ENCODE measurements at regions of chr3 and their contacts with region 1.

Region 1: GRCh38 chr3:141360888-141361598 is 7.3 kb upstream of the ZBTB38 start:
- DNase-seq: no peak
- H3K4me3 Mint-ChIP-seq: no peak overlapping the region
- H3K27ac Mint-ChIP-seq: no peak overlapping the region
- H3K4me1 Mint-ChIP-seq: peaks cover 8% of the 10 kb centered on the region
- H3K27me3 Mint-ChIP-seq: peaks cover 20% of the 10 kb centered on the region

Region 2: GRCh38 chr3:141129541-141130011 is 231.5 kb before region 1 on chr3:
- CTCF ChIA-PET with region 1: no interaction called
- DNase-seq: no peak
- H3K4me3 Mint-ChIP-seq: no peak overlapping the region
- H3K27ac Mint-ChIP-seq: no peak overlapping the region
- H3K4me1 Mint-ChIP-seq: no peaks in the 10 kb centered on the region
- H3K27me3 Mint-ChIP-seq: peaks cover 6% of the 10 kb centered on the region

Region 3: DNA sequence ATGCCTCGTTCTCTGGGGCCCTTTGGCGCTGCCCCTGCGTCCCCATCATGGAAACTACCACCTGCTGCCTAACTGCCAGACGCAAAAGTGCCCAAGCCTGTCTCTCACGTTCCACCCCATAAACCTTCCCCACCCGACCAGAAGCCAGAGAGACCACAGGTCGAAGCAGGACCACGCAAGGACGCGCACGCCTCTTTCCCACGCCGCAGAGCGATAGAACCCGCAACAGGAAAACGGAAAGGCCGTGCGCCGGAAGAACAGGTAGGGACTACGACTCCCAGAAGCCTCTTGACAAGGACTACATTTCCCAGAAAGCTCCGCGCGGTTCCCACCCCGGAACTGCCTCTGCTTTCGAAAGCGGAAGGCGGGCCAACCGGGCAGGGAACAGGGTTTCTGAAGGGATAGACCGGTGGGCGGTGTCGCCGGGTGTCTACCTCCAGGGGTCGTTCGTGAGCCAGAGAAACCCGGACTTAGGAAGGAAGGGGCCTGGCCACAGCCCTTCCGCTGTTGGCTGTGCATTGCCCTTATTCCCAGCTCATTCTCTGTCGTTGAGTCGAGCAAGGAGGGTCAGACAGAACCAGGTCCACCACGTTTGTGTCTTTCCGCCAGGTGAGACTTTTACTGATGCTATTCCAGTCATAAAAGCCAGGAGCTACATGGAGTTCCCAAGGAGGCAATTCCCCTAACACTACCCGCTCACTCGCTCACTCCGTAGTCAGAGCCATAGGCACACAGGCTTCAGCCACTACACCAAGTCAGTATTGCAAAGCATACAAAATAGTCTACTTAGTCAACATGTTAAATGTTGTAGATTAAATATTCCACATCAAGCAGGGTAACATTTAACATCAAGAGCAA is 49.3 kb before region 1 on chr3:
- CTCF ChIA-PET with region 1: interaction called, 48 read pairs
- DNase-seq: peak; percentile 99
- H3K4me3 Mint-ChIP-seq: peak overlapping the region; percentile 96
- H3K27ac Mint-ChIP-seq: peak overlapping the region; percentile 97
- H3K4me1 Mint-ChIP-seq: peaks cover 64% of the 10 kb centered on the region
- H3K27me3 Mint-ChIP-seq: no peaks in the 10 kb centered on the region

Region 4: GRCh38 chr3:141323936-141324704 is 36.9 kb before region 1 on chr3:
- CTCF ChIA-PET with region 1: interaction called, 12 read pairs
- DNase-seq: no peak
- H3K4me3 Mint-ChIP-seq: no peak overlapping the region
- H3K27ac Mint-ChIP-seq: no peak overlapping the region
- H3K4me1 Mint-ChIP-seq: peaks cover 21% of the 10 kb centered on the region
- H3K27me3 Mint-ChIP-seq: peaks cover 10% of the 10 kb centered on the region

Region 5: DNA sequence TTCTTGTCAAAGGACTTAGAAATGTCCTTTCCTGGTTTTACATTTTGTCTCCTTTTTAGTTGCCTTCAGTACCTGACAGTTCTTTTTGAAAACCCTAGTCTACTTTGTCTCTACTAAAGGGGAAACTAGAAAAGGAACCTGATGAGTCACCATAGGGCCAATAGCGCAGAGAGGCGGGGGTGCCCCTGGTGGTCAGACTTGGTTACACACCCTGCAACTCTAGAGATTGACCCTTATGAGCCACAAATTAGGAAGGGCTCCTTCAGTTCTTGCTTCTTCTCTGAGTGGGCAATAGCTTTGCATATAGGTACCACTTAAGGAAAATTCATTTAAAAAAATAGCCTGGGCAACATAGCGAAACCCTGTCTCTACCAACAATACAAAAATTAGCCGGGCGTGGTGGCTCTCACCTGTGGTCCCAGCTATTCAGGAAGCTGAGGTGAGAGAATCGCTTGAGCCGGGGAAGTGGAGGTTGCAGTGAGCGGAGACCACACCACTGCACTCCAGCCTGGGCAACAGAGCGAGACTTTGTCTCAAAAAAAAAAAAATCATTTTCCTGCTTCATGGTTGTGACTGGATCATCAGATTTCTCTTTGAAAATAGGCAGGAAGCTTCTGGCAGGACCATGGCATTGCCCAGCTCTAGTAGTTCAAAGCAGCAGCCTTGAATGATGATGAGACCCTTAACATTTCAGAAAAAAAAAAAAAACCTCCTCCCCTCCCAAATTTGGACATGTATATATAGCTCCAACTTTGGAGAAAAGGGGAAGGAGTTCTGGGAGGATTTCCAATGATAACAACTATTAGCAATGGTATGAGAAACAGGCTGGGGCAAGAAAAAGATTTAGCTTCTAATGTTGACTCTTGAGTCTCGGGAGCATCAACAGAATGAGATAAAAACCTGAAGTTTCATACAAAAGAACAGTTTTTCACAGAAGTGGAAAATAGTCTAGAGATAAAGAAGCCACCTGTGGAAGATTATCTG is 80.6 kb after region 1 on chr3:
- CTCF ChIA-PET with region 1: interaction called, 73 read pairs
- DNase-seq: peak; percentile 79
- H3K4me3 Mint-ChIP-seq: no peak overlapping the region
- H3K27ac Mint-ChIP-seq: no peak overlapping the region
- H3K4me1 Mint-ChIP-seq: peaks cover 22% of the 10 kb centered on the region
- H3K27me3 Mint-ChIP-seq: no peaks in the 10 kb centered on the region

Region 6: DNA sequence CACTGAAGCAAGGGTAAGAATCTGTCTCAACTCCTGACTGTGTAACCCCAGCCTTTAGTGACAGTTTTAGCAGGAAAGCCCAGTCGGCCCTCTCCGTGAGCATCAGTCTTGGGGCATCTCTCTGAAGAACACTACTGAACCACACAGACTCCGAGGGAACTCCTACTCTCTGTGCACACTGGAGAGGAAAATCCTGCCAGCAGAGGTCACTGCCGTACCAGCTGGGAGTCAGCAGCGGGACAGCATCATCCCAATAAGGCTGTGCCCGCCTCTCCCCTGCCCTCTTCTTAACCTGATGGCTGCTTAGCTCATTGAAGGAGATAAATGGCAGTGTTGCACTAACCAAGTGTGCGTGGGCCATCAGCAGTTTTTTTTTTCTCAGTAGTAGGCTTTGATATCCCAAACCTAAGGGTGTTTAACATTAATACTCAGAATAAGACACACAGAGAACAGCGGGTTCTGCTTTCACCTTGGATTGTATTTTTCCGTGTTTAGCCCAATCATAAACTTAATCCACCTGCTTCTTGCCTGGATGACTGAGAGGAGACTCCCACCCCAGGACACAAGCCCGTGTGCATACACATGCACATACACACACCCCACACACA is 99.2 kb after region 1 on chr3:
- CTCF ChIA-PET with region 1: interaction called, 201 read pairs
- DNase-seq: peak; percentile 93
- H3K4me3 Mint-ChIP-seq: no peak overlapping the region
- H3K27ac Mint-ChIP-seq: no peak overlapping the region
- H3K4me1 Mint-ChIP-seq: peaks cover 4% of the 10 kb centered on the region
- H3K27me3 Mint-ChIP-seq: peaks cover 12% of the 10 kb centered on the region